ENCODE measurements at regions of chr21 and their contacts with region 1.

Region 1: DNA sequence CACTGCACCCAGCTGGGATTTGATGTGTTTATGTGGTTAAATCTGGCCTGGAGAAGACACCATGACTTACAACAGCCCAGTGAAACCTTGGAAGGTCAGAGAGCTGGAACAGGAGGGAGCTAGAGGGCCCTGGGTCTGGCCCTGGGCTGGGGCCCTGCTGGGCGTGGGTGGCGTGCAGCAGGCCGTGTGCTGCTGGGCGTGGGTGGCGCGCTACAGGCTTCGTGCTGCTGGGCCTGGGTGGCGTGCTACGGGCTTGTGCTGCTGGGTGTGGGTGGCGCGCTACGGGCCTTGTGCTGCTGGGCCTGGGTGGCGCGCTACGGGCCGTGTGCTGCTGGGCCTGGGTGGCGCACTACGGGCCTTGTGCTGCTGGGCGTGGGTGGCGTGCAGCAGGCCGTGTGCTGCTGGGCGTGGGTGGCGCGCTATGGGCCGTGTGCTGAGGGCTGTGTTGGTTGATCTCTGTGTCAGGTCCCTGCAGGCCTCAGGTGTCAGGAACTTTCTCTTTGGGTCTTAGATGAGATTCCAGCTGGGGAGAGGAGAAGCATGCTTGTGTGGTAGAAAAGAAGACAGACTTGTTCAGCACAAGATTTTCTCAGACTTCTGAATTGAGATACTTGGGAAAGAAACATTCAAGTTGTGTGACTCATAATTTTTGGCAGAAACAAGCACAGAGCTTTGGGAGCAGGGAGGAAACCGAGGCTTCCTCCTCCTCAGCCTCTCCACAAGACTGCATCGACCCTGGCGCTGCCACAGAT is 66.0 kb downstream of the COL18A1 start:
- DNase-seq: no peak
- ATAC-seq: peak; percentile 72
- H3K4me3 ChIP-seq: no peak overlapping the region
- H3K27ac ChIP-seq: no peak overlapping the region
- H3K4me1 ChIP-seq: no peaks in the 10 kb centered on the region
- H3K27me3 ChIP-seq: no peaks in the 10 kb centered on the region
- CTCF ChIP-seq: no peak
- EP300 ChIP-seq: no peak
- POLR2A ChIP-seq: no peak
- RAD21 ChIP-seq: no peak

Region 2: GRCh38 chr21:45409466-45410150 is 61.3 kb before region 1 on chr21:
- CTCF ChIA-PET with region 1: no interaction called
- POLR2A ChIA-PET with region 1: no interaction called
- RAD21 ChIA-PET with region 1: no interaction called
- SMC1A ChIA-PET with region 1: no interaction called
- in situ Hi-C with region 1: no loop called
- intact Hi-C with region 1: no loop called
- DNase-seq: no peak
- ATAC-seq: no peak
- H3K4me3 ChIP-seq: no peak overlapping the region
- H3K27ac ChIP-seq: no peak overlapping the region
- H3K4me1 ChIP-seq: no peaks in the 10 kb centered on the region
- H3K27me3 ChIP-seq: peaks cover 0 to 2% of the 10 kb centered on the region in 2 experiments; a peak in 3 of 4 replicates
- CTCF ChIP-seq: no peak
- EP300 ChIP-seq: no peak
- POLR2A ChIP-seq: no peak
- RAD21 ChIP-seq: no peak

Region 3: GRCh38 chr21:45820171-45821091 is 349.5 kb after region 1 on chr21:
- CTCF ChIA-PET with region 1: no interaction called
- POLR2A ChIA-PET with region 1: no interaction called
- RAD21 ChIA-PET with region 1: no interaction called
- SMC1A ChIA-PET with region 1: no interaction called
- in situ Hi-C with region 1: loop called (anchors 25 kb)
- intact Hi-C with region 1: loop called (anchors 10 kb)
- DNase-seq: no peak
- ATAC-seq: peak; percentile 88
- H3K4me3 ChIP-seq: no peak overlapping the region
- H3K27ac ChIP-seq: no peak overlapping the region
- H3K4me1 ChIP-seq: peaks cover 4% of the 10 kb centered on the region
- H3K27me3 ChIP-seq: no peaks in the 10 kb centered on the region
- CTCF ChIP-seq: peak; percentile 83 to 94 (median 90); a peak in 5 of 6 replicates
- EP300 ChIP-seq: no peak
- POLR2A ChIP-seq: no peak
- RAD21 ChIP-seq: peak; percentile 94

Measured in GM12878 (cell line).